PC-3 (cell line): ENCODE measurements at regions of chr1 and their contacts with region 1.

Region 1: DNA sequence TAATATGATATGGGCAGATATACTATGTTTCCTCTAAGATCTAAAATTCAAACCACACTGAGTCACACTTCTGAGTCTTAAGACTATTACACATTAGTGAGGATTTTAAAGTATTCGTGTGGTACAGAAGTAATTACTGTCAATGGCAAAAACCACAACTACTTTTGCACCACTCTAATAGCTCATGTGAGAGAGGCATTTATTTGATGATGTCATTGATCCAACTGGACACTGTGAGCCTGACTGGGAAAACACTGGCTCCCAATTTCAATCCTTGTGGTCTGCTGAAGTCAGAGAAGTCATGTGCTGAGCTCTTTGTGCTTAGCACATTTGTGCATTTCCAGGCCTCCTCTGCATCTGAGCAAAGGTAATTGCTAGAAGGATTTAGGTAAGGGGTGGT is 377.8 kb downstream of the USH2A start:
- DNase-seq: peak; percentile 45
- ATAC-seq: peak; percentile 40
- H3K4me3 ChIP-seq: no peak overlapping the region
- H3K27ac ChIP-seq: no peak overlapping the region
- H3K4me1 ChIP-seq: no peaks in the 10 kb centered on the region
- H3K27me3 ChIP-seq: peaks cover 35% of the 10 kb centered on the region
- CTCF ChIP-seq: no peak

Region 2: GRCh38 chr1:216437603-216438002 is 392.2 kb after region 1 on chr1:
- CTCF ChIA-PET with region 1: no interaction called
- POLR2A ChIA-PET with region 1: interaction called, 32 read pairs
- intact Hi-C with region 1: no loop called
- DNase-seq: no peak
- ATAC-seq: no peak
- H3K4me3 ChIP-seq: no peak overlapping the region
- H3K27ac ChIP-seq: no peak overlapping the region
- H3K4me1 ChIP-seq: no peaks in the 10 kb centered on the region
- H3K27me3 ChIP-seq: no peaks in the 10 kb centered on the region
- CTCF ChIP-seq: no peak

Region 3: GRCh38 chr1:216830424-216831210 is 785.2 kb after region 1 on chr1:
- CTCF ChIA-PET with region 1: no interaction called
- POLR2A ChIA-PET with region 1: interaction called, 10 read pairs
- intact Hi-C with region 1: no loop called
- DNase-seq: peak; percentile 26
- ATAC-seq: peak; percentile 37
- H3K4me3 ChIP-seq: no peak overlapping the region
- H3K27ac ChIP-seq: no peak overlapping the region
- H3K4me1 ChIP-seq: no peaks in the 10 kb centered on the region
- H3K27me3 ChIP-seq: peaks cover 7% of the 10 kb centered on the region; the same call in 1 of the 2 replicates
- CTCF ChIP-seq: no peak